Gastrocnemius medialis (tissue), 4 donors: ENCODE measurements at regions of chr6 and their contacts with region 1.

Region 1: DNA sequence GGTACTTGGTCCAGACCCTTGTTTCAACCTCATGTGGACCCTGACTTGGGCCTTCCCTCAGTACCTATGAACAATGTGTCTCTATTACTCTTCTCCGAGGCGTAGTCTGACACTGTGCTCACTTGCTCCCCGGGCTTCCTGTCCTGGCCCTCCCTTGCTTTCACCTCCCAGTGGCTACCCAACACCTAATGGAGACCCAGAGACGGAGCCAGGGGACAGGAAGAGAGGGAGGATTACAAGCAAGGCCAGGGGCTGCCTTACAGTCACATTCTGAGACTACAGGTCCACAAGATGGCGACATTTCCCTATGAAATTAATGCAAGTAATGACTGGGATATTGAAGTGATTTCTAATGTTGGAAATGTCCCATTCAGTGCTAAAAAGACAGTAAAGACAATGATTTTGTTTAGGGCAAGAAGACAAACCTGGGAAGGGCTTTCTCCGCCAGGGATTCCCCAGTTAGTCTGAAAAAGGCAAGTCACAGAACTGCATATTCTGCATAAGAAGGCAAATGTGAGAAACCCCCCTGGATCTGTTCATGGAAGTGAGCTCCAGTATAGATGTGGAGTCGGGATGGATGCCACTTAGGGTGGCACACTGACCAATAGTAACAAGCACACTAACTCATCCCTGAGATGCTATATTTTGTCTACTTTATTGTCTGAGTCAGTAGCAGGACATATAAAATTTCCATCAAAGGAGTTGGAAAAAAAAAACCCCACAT is 44.0 kb upstream of the ZBTB24 start:
- DNase-seq: no peak
- ATAC-seq: peak in 1 of 2 donors; percentile 36
- H3K4me3 ChIP-seq: no peak overlapping the region
- H3K27ac ChIP-seq: no peak overlapping the region
- H3K4me1 ChIP-seq: no peaks in the 10 kb centered on the region
- H3K27me3 ChIP-seq: no peaks in the 10 kb centered on the region
- CTCF ChIP-seq: peak; percentile 5 to 49 (median 25)
- POLR2A ChIP-seq: no peak

Region 2: DNA sequence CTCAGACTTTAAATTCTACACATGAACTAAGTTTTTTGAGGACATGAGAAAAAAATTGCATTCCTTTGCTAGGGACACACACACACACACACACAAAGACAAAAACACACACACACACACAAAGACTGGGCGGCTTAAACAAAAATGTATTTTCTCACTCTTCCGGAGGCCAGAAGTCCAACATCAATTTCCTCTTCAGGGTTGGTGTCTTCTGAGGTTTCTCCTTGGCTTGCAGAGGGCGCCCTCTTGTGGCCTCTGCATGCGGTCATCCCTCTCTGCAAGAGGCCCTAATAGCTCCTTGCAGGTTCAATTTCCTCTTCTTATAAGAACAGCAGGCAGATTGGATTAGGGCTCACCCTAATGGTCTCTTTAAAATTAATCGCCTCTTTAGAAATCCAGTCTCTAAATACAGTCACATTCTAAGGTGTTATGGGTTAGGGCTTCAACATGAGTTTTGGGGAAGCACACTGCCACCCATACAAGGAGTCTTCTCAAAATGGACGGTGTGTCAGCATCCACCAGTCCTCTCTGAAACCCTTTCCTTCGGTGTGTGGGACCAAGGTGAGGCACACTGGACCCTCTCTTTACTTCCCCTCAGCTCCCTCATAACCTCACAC is 512.4 kb after region 1 on chr6:
- in situ Hi-C with region 1: loop called in 2 of 4 experiments (anchors 25 kb)
- intact Hi-C with region 1: loop called (anchors 10 kb)
- DNase-seq: peak; percentile 46 to 59
- ATAC-seq: peak; percentile 80 to 82
- H3K4me3 ChIP-seq: no peak overlapping the region
- H3K27ac ChIP-seq: no peak overlapping the region
- H3K4me1 ChIP-seq: no peaks in the 10 kb centered on the region
- H3K27me3 ChIP-seq: no peaks in the 10 kb centered on the region
- CTCF ChIP-seq: peak; percentile 48 to 89 (median 73)
- POLR2A ChIP-seq: no peak

Region 3: GRCh38 chr6:110398778-110399177 is 871.7 kb after region 1 on chr6:
- in situ Hi-C with region 1: loop called in 1 of 4 experiments (anchors 25 kb)
- intact Hi-C with region 1: no loop called
- DNase-seq: no peak
- ATAC-seq: no peak
- H3K4me3 ChIP-seq: no peak overlapping the region
- H3K27ac ChIP-seq: no peak overlapping the region
- H3K4me1 ChIP-seq: no peaks in the 10 kb centered on the region
- H3K27me3 ChIP-seq: no peaks in the 10 kb centered on the region
- CTCF ChIP-seq: no peak
- POLR2A ChIP-seq: no peak